H1 (cell line): ENCODE measurements at regions of chr9 and their contacts with region 1.

Region 1: GRCh38 chr9:120505186-120505585 is 74.8 kb downstream of the CDK5RAP2 start:
- DNase-seq: no peak
- H3K4me3 ChIP-seq: no peak overlapping the region
- H3K27ac ChIP-seq: no peak overlapping the region
- H3K4me1 ChIP-seq: no peaks in the 10 kb centered on the region
- H3K27me3 ChIP-seq: no peaks in the 10 kb centered on the region
- CTCF ChIP-seq: peak in 1 of 3 experiments; percentile 38; a peak in 1 of 4 replicates
- EP300 ChIP-seq: no peak
- POLR2A ChIP-seq: no peak
- RAD21 ChIP-seq: peak; percentile 46 to 49

Region 2: GRCh38 chr9:120221844-120222243 is 283.3 kb before region 1 on chr9:
- CTCF ChIA-PET with region 1: no interaction called
- POLR2A ChIA-PET with region 1: no interaction called
- DNase-seq: peak in 1 of 2 experiments; percentile 48
- H3K4me3 ChIP-seq: no peak overlapping the region
- H3K27ac ChIP-seq: no peak overlapping the region
- H3K4me1 ChIP-seq: peaks cover 0 to 4% (median 1%) of the 10 kb centered on the region in 4 experiments; a peak in 3 of 7 replicates
- H3K27me3 ChIP-seq: no peaks in the 10 kb centered on the region
- CTCF ChIP-seq: peak in 1 of 3 experiments; percentile 12; a peak in 1 of 4 replicates
- EP300 ChIP-seq: no peak
- POLR2A ChIP-seq: no peak
- RAD21 ChIP-seq: 0 out of 4 replicates have a peak, but pooled peaks of 1 of the 2 experiments have one; percentile 10

Region 3: GRCh38 chr9:120524863-120525262 is 19.7 kb after region 1 on chr9:
- CTCF ChIA-PET with region 1: interaction called, 11 read pairs
- POLR2A ChIA-PET with region 1: interaction called, 3 read pairs
- DNase-seq: no peak
- H3K4me3 ChIP-seq: no peak overlapping the region
- H3K27ac ChIP-seq: no peak overlapping the region
- H3K4me1 ChIP-seq: peaks cover 0 to 20% (median 15%) of the 10 kb centered on the region in 4 experiments; a peak in 6 of 7 replicates
- H3K27me3 ChIP-seq: no peaks in the 10 kb centered on the region
- CTCF ChIP-seq: no peak
- EP300 ChIP-seq: no peak
- POLR2A ChIP-seq: no peak
- RAD21 ChIP-seq: no peak

Region 4: GRCh38 chr9:120531683-120532300 is 26.6 kb after region 1 on chr9:
- CTCF ChIA-PET with region 1: interaction called, 11 read pairs
- POLR2A ChIA-PET with region 1: no interaction called
- DNase-seq: peak in 1 of 2 experiments; percentile 52
- H3K4me3 ChIP-seq: no peak overlapping the region
- H3K27ac ChIP-seq: no peak overlapping the region
- H3K4me1 ChIP-seq: peaks cover 0 to 14% (median 10%) of the 10 kb centered on the region in 4 experiments; a peak in 6 of 7 replicates
- H3K27me3 ChIP-seq: no peaks in the 10 kb centered on the region
- CTCF ChIP-seq: peak; percentile 26 to 63 (median 56)
- EP300 ChIP-seq: no peak
- POLR2A ChIP-seq: no peak
- RAD21 ChIP-seq: peak; percentile 78 to 79

Region 5: DNA sequence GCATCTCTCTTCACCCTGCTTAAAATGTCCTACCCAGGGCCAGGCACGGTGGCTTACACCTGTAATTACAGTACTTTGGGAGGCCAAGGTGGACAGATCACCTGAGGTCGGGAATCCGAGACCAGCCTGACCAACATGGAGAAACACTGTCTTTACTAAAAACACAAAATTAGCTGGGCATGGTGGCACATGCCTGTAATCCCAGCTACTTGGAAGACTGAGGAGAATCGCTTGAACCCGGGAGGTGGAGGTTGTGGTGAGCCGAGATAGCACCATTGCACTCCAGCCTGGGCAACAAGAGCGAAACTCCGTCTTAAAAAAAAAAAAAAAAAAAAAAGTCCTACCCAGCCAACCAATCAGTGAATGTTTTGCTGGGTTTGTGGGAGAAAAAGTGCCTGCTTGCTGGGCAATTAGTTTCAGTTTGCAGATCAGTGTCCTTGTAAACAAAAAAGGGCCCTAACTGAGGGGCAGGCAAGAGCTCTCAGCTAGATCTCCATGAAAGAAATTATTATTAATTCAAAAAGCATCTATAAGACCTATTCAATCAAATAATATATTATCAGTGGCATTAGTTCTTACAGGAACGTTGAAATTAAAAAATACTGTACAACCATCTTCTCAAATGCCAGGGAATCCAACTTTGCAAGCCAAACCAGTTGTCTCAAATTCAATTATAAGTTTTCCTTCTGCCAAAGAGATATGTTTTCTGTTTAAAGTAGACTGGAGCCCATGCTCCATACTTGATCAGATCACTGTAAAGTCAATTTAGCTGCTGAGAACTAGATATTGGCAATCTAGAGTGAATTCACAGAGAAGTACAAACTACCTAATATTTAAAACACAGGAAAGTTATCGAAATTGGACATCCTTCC is 205.2 kb after region 1 on chr9:
- CTCF ChIA-PET with region 1: no interaction called
- POLR2A ChIA-PET with region 1: no interaction called
- DNase-seq: no peak
- H3K4me3 ChIP-seq: no peak overlapping the region
- H3K27ac ChIP-seq: no peak overlapping the region
- H3K4me1 ChIP-seq: peaks cover 0 to 6% (median 6%) of the 10 kb centered on the region in 4 experiments; a peak in 4 of 7 replicates
- H3K27me3 ChIP-seq: peaks cover 4 to 17% (median 15%) of the 10 kb centered on the region in 4 experiments; a peak in 6 of 7 replicates
- CTCF ChIP-seq: no peak
- EP300 ChIP-seq: no peak
- POLR2A ChIP-seq: no peak
- RAD21 ChIP-seq: no peak